ENCODE measurements at regions of chr19 and their contacts with region 1.

Region 1: GRCh38 chr19:1551068-1552040 is 16.8 kb downstream of the MEX3D start:
- DNase-seq: no peak
- ATAC-seq: no peak
- H3K4me3 ChIP-seq: no peak overlapping the region
- H3K4me3 Mint-ChIP-seq: no peak overlapping the region
- H3K27ac ChIP-seq: no peak overlapping the region
- H3K27ac Mint-ChIP-seq: no peak overlapping the region
- H3K4me1 ChIP-seq: peaks cover 4% of the 10 kb centered on the region
- H3K4me1 Mint-ChIP-seq: no peaks in the 10 kb centered on the region
- H3K27me3 ChIP-seq: no peaks in the 10 kb centered on the region
- H3K27me3 Mint-ChIP-seq: peaks cover 24% of the 10 kb centered on the region
- CTCF ChIP-seq: no peak

Region 2: GRCh38 chr19:1767464-1767933 is 216.1 kb after region 1 on chr19:
- CTCF ChIA-PET with region 1: interaction called, 8 read pairs
- POLR2A ChIA-PET with region 1: no interaction called
- intact Hi-C with region 1: loop called in 1 of 2 experiments (anchors 1 kb)
- DNase-seq: peak; percentile 36 to 78 (median 55)
- ATAC-seq: peak; percentile 88
- H3K4me3 ChIP-seq: no peak overlapping the region
- H3K4me3 Mint-ChIP-seq: no peak overlapping the region
- H3K27ac ChIP-seq: no peak overlapping the region
- H3K27ac Mint-ChIP-seq: no peak overlapping the region
- H3K4me1 ChIP-seq: peaks cover 9% of the 10 kb centered on the region
- H3K4me1 Mint-ChIP-seq: no peaks in the 10 kb centered on the region
- H3K27me3 ChIP-seq: peaks cover 81 to 86% of the 10 kb centered on the region in 2 experiments
- H3K27me3 Mint-ChIP-seq: peaks cover 84% of the 10 kb centered on the region
- CTCF ChIP-seq: peak; percentile 91

Region 3: DNA sequence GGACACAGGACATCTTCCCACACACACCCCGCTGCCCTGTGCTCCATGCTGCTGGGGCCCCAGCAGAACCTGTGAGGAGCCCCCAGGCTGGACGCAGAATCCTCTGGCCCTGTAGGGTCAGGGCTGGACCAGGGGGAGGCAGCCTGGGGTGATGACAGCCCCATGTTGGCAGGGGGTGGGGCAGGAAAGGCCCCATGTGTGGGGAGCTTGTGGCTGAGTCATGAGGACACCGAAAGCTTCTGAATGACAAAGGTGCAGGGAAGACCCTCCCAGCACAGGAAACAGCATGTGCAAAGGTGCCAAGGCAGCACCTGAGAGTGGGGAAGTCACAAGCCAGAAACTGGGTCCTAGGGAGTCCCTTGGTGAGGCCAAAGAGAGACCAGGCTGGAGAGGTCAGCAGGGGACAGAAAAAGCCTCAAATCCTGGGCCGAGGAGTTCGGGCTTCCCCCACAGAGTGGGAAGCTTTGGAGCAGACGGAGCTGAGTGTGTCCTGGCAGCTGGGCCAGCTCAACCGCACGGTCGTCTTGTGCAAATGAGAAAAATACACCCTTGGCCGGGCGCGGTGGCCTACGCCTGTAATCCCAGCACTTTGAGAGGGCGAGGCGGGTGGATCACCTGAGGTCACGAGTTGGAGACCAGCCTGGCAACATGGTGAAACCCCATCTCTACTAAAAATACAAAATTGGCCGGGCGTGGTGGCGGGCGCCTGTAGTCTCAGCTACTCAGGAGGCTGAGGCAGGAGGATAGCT is 243.2 kb after region 1 on chr19:
- CTCF ChIA-PET with region 1: no interaction called
- POLR2A ChIA-PET with region 1: no interaction called
- intact Hi-C with region 1: loop called (anchors 5 to 10 kb)
- DNase-seq: peak in 1 of 14 experiments; percentile 22
- ATAC-seq: no peak
- H3K4me3 ChIP-seq: no peak overlapping the region
- H3K4me3 Mint-ChIP-seq: no peak overlapping the region
- H3K27ac ChIP-seq: no peak overlapping the region
- H3K27ac Mint-ChIP-seq: no peak overlapping the region
- H3K4me1 ChIP-seq: peaks cover 7% of the 10 kb centered on the region
- H3K4me1 Mint-ChIP-seq: no peaks in the 10 kb centered on the region
- H3K27me3 ChIP-seq: peaks cover 6 to 14% of the 10 kb centered on the region in 2 experiments
- H3K27me3 Mint-ChIP-seq: peaks cover 19% of the 10 kb centered on the region
- CTCF ChIP-seq: no peak

Region 4: GRCh38 chr19:1812469-1813196 is 261.3 kb after region 1 on chr19:
- CTCF ChIA-PET with region 1: no interaction called
- POLR2A ChIA-PET with region 1: no interaction called
- intact Hi-C with region 1: loop called in 1 of 2 experiments (anchors 5 kb)
- DNase-seq: peak; percentile 70 to 93 (median 78)
- ATAC-seq: peak; percentile 70
- H3K4me3 ChIP-seq: peak overlapping the region; percentile 81
- H3K4me3 Mint-ChIP-seq: peak overlapping the region; percentile 96
- H3K27ac ChIP-seq: peak overlapping the region in 1 of 2 donors; percentile 34
- H3K27ac Mint-ChIP-seq: peak overlapping the region; percentile 87
- H3K4me1 ChIP-seq: peaks cover 22% of the 10 kb centered on the region
- H3K4me1 Mint-ChIP-seq: peaks cover 11% of the 10 kb centered on the region
- H3K27me3 ChIP-seq: no peaks in the 10 kb centered on the region
- H3K27me3 Mint-ChIP-seq: no peaks in the 10 kb centered on the region
- CTCF ChIP-seq: peak; percentile 58

Region 5: DNA sequence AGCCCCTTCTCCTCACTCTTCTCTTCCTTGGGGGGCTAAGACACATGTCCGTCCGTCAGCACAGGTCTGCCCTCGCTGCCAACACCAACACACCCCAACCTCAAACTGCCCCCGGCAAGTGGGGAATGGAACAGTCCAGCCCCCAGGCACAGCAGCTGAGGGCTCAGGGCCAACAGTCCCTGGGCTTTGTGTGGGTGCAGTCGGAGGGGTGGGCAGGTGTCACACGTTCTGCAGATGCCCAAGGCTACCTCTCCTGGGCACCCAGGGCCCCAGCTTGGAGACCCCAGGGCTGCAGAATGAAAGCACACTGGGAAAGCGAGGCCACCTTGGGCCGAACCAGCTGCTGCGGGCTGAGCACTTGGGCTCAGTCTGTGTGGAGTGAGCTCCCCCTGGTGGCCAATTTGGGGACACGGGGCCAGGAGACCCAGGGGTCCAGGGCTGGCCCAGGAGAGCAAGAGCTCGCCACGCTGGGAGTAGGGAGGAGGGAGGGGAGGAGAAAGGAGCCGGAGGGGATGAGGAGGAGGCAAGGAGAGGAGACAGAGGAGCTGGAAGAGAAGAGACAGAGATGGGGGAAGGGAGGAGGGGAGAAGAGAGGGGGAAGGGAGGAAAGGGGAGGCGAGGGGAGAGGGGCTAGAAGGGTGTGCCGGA is 274.7 kb after region 1 on chr19:
- CTCF ChIA-PET with region 1: interaction called, 13 read pairs
- POLR2A ChIA-PET with region 1: no interaction called
- intact Hi-C with region 1: loop called in 1 of 2 experiments (anchors 10 kb)
- DNase-seq: peak; percentile 69 to 88 (median 74)
- ATAC-seq: peak; percentile 86
- H3K4me3 ChIP-seq: no peak overlapping the region
- H3K4me3 Mint-ChIP-seq: peak overlapping the region; percentile 15
- H3K27ac ChIP-seq: no peak overlapping the region
- H3K27ac Mint-ChIP-seq: peak overlapping the region; percentile 30
- H3K4me1 ChIP-seq: peaks cover 10% of the 10 kb centered on the region
- H3K4me1 Mint-ChIP-seq: peaks cover 4% of the 10 kb centered on the region
- H3K27me3 ChIP-seq: no peaks in the 10 kb centered on the region
- H3K27me3 Mint-ChIP-seq: no peaks in the 10 kb centered on the region
- CTCF ChIP-seq: peak; percentile 86

Measured in CD4-positive, alpha-beta T cell (primary cell).